Activated CD8-positive, alpha-beta T cell treated with anti-CD3 and anti-CD28 coated beads, Interleukin-2, amount 10 ng/mL, durations not matched to agents 7 days and 5 days (primary cell): ENCODE measurements at regions of chr12 and their contacts with region 1.

Region 1: DNA sequence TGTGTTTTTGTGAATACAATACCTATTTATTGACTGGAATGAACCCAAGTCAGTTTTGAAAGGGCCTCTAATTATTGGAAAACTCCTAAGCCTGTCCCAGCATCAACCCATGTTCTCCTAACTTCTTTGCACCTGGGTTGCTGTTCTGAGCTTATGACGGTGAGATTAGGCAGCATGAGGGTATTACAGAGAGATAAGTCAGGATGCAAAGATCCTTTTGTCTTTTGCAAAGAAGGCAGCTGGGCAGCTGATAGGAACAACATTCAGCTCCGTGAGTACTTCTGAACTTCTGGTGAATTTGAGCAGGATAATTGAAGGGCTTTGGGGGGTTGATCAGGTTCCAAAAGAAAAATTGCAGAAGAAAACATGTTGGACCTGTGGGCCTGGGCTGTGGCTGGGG is at the start of gene PDE6H:
- DNase-seq: no peak
- ATAC-seq: no peak
- H3K4me3 Mint-ChIP-seq: no peak within 1 kb of the TSS
- H3K27ac Mint-ChIP-seq: no peak within 1 kb of the TSS
- H3K4me1 Mint-ChIP-seq: peaks cover 26% of the 10 kb centered on the region
- H3K27me3 Mint-ChIP-seq: no peaks in the 10 kb centered on the region
- total RNA-seq, gene PDE6H: 0.40 TPM in 1 of 2 experiments, not detected in the other

Region 2: DNA sequence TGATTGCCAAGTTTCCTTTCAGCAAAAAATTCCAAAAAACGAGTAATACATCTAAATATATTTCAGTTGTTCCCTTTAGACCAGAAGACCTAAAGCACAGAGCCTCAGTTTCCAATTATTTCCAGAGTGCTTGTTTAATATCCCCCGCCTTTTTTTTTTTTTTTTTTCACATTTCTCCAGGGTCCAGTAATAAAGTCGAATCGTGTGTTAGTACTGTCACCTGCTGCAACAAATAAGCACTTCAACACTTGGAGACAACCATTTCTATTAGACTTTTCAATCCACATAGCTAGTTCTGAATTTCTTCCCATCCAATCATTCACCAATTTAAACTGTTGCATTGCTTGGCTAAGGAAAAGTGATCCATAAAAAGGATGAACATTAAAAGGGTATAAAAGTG is 13.6 kb after region 1 on chr12:
- CTCF ChIA-PET with region 1: interaction called, 10 read pairs
- POLR2A ChIA-PET with region 1: no interaction called
- DNase-seq: no peak
- ATAC-seq: no peak
- H3K4me3 Mint-ChIP-seq: no peak overlapping the region
- H3K27ac Mint-ChIP-seq: no peak overlapping the region
- H3K4me1 Mint-ChIP-seq: peaks cover 30% of the 10 kb centered on the region
- H3K27me3 Mint-ChIP-seq: peaks cover 2% of the 10 kb centered on the region

Region 3: GRCh38 chr12:15146585-15146984 is 173.8 kb after region 1 on chr12:
- CTCF ChIA-PET with region 1: no interaction called
- POLR2A ChIA-PET with region 1: no interaction called
- DNase-seq: no peak
- ATAC-seq: no peak
- H3K4me3 Mint-ChIP-seq: no peak overlapping the region
- H3K27ac Mint-ChIP-seq: no peak overlapping the region
- H3K4me1 Mint-ChIP-seq: no peaks in the 10 kb centered on the region
- H3K27me3 Mint-ChIP-seq: peaks cover 12% of the 10 kb centered on the region